ENCODE measurements at regions of chr19 and their contacts with region 1.

Region 1: DNA sequence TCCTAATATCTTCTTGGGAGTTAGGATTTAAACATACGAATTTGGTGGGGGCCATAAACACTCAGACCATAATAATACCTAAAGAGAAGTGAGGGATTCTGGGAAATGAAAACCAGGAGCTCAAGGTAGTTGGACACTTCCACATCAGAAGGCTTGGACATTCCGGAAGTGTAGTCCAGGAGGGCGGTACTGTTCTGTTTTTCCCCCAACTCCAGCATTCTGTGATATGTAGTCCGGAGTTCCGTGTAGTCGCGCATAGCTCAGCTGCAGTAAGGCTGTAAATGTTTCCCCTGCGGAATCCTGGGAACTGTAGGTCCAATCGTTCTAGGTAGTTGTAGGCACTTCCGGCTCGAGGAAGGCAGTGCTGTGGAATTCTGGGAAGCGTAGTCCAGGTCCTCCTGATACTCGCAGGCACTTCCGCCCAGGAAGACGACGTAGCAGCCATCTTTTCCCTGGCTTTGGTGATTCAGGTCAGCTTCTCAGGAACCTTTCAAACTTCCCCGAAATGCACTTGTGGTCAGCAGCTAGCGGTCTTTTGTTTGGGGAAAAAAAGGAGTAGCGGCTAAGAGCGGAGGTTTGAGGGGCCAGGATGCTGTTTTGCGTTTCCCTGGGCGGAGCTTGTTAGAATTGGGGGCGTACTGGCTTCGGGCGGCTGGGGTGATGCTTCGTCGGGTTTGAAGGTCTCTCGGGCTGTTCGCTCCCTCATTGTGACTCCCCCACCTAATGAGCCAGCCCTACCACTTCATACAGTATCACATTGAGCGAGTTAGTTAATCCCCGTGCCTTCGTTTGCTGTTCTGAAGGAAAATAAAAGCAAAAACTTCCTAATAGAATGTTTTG is at the start of gene ZNF226:
- DNase-seq: peak; percentile 75 to 80
- H3K4me3 ChIP-seq: peak within 1 kb of the TSS; percentile 77 to 95 (median 84)
- H3K27ac ChIP-seq: peak within 1 kb of the TSS; percentile 84
- H3K4me1 ChIP-seq: peaks cover 0 to 5% (median 0%) of the 10 kb centered on the region in 4 experiments; a peak in 1 of 7 replicates
- H3K27me3 ChIP-seq: no peaks in the 10 kb centered on the region
- CTCF ChIP-seq: no peak
- EP300 ChIP-seq: no peak
- POLR2A ChIP-seq: peak; percentile 50 to 90
- RAD21 ChIP-seq: no peak
- total RNA-seq, gene ZNF226: 12.6 and 18.3 TPM in 2 replicates

Region 2: DNA sequence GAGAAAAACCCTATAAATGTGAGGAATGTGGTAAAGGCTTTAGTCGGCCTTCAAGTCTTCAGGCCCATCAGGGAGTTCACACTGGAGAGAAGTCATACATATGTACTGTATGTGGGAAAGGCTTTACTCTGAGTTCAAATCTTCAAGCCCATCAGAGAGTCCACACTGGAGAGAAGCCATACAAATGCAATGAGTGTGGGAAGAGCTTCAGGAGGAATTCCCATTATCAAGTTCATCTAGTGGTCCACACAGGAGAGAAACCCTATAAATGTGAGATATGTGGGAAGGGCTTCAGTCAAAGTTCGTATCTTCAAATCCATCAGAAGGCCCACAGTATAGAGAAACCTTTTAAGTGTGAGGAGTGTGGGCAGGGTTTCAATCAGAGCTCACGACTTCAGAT is 11.7 kb after region 1 on chr19:
- CTCF ChIA-PET with region 1: no interaction called
- POLR2A ChIA-PET with region 1: interaction called, 19 read pairs
- DNase-seq: no peak
- H3K4me3 ChIP-seq: no peak overlapping the region
- H3K27ac ChIP-seq: no peak overlapping the region
- H3K4me1 ChIP-seq: no peaks in the 10 kb centered on the region
- H3K27me3 ChIP-seq: no peaks in the 10 kb centered on the region
- CTCF ChIP-seq: no peak
- EP300 ChIP-seq: no peak
- POLR2A ChIP-seq: no peak
- RAD21 ChIP-seq: no peak

Region 3: GRCh38 chr19:44207126-44207803 is 42.4 kb after region 1 on chr19:
- CTCF ChIA-PET with region 1: no interaction called
- POLR2A ChIA-PET with region 1: interaction called, 12 read pairs
- DNase-seq: peak; percentile 80 to 81
- H3K4me3 ChIP-seq: peak overlapping the region; percentile 63 to 97 (median 86)
- H3K27ac ChIP-seq: peak overlapping the region; percentile 13; the same call in 1 of the 2 replicates
- H3K4me1 ChIP-seq: no peaks in the 10 kb centered on the region
- H3K27me3 ChIP-seq: 0 out of 7 replicates have a peak, but pooled peaks cover 0 to 2% (median 0%) of the 10 kb centered on the region in 4 experiments
- CTCF ChIP-seq: no peak
- EP300 ChIP-seq: no peak
- POLR2A ChIP-seq: no peak
- RAD21 ChIP-seq: no peak

Region 4: GRCh38 chr19:44228318-44228717 is 63.4 kb after region 1 on chr19:
- CTCF ChIA-PET with region 1: no interaction called
- POLR2A ChIA-PET with region 1: no interaction called
- DNase-seq: no peak
- H3K4me3 ChIP-seq: no peak overlapping the region
- H3K27ac ChIP-seq: no peak overlapping the region
- H3K4me1 ChIP-seq: no peaks in the 10 kb centered on the region
- H3K27me3 ChIP-seq: no peaks in the 10 kb centered on the region
- CTCF ChIP-seq: no peak
- EP300 ChIP-seq: no peak
- POLR2A ChIP-seq: no peak
- RAD21 ChIP-seq: no peak